ENCODE measurements at regions of chr14 and their contacts with region 1.

Region 1: DNA sequence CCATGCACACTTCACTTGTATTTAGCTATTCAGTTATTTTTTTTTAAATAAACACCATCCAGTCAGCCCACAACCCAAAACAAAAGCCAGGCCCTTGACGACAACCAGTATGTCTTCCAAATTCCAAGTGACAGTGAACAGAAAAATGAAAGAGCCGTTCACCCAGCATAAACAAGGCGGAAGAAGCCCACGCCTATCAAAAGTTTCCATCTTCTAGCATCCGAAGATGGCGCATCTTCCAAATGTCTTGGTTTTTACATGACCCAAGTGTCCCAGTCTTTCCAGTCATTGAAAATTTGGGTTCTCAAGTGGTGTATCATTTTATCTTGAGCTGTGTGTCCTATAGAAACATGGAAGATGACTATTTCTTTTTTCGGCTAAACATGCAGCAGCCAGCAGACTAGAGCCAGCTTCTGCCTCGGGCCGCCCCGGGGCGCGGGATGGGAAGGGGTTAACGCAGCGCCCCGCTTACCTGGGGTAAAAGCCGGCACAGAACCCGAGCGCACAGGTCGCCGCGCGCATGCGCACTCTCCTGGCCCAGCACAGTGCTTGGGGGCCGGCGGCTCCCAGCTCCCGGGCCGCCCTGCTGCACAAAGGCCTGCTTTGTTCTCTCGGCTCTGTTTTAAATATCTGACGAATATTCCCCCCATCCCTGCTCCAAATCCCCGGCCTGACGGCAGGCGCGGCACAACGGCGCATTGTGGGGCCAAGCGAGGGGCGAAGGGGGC is 164.8 kb downstream of the ZFP36L1 start:
- DNase-seq: peak; percentile 52
- ATAC-seq: peak; percentile 76
- H3K4me3 Mint-ChIP-seq: peak overlapping the region; percentile 80
- H3K27ac Mint-ChIP-seq: peak overlapping the region; percentile 80
- H3K4me1 Mint-ChIP-seq: peaks cover 28% of the 10 kb centered on the region
- H3K27me3 Mint-ChIP-seq: no peaks in the 10 kb centered on the region
- CTCF ChIP-seq: no peak

Region 2: DNA sequence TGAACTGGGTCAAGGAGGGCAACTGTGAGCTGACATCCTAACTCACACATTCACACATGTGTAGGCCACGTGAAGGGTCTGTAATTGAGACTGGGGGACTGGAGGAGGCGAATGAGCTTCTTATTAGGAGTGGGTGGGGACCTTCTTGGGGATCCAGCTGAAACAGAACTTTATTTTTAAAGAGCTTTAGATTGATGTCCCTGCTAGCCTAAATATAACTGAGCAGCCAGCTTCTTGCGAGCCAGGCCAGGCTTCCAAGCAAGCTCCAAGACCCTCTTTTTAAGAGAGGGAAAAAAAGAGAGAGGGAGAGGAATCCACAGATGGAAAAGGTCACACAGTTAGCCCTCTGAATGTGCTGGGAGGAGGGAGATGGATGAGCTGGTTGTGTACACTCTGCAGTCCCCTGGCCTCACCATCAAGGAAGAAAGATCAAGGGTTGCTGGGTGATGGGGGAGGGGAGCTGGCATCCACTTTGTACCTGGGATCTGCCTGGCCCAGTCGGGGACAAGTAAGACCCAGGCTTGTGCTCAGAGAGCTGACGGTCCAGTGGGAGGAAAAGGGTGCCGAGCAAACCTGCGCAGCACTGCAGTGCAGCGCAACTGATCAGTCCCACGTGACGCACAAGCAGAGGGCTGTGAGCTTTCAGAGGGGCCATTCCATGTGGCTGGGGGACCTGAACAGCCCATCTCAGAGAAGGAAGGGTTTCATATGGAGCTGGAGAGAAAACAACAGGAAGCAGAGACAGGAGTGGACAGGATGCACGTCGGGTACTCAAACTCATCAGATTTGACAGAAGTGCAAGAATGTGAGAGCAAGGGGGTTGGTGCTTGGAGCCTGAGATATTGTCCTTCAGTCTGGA is 10.3 kb after region 1 on chr14:
- CTCF ChIA-PET with region 1: no interaction called
- POLR2A ChIA-PET with region 1: interaction called, 11 read pairs
- intact Hi-C with region 1: no loop called
- DNase-seq: no peak
- ATAC-seq: no peak
- H3K4me3 Mint-ChIP-seq: no peak overlapping the region
- H3K27ac Mint-ChIP-seq: no peak overlapping the region
- H3K4me1 Mint-ChIP-seq: peaks cover 7% of the 10 kb centered on the region
- H3K27me3 Mint-ChIP-seq: no peaks in the 10 kb centered on the region
- CTCF ChIP-seq: no peak

Region 3: DNA sequence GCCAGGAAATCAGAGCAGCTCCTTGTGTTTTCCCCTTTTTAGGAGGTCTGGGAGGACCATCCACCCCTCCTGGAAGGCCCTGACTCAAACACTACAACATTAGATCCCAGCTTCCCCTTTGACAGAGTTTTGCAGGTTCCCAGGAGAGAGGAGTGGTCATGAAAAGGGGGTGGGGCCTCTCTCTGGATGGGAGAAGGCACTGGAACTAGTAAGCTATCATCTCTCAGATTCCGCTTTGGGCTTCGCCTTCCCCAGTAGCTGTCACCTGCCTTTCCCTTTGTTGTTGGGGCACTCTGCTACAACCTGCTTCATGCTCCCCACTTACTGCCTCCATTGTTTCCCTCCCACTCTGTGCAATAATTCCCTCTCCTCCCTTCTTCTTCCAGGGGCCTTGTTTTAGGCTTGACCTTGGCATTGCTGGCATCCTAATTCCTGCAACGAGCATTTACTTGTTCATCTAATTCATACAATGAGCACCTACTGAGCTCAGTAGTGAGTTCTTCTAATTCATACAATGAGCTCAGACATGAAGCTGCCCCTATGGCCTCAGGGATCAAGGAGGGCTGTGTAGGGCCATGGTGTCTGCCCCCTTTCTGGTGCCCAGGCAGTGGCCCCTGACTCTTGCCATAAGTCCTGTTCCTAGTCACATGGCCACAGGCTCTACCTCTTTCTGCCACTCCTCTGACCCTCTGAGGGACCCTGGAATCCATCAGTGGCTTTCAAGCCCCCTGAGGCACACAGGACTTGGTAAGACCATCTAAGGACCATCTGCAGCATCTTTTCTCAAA is 15.9 kb after region 1 on chr14:
- CTCF ChIA-PET with region 1: no interaction called
- POLR2A ChIA-PET with region 1: interaction called, 11 read pairs
- intact Hi-C with region 1: no loop called
- DNase-seq: no peak
- ATAC-seq: no peak
- H3K4me3 Mint-ChIP-seq: no peak overlapping the region
- H3K27ac Mint-ChIP-seq: no peak overlapping the region
- H3K4me1 Mint-ChIP-seq: no peaks in the 10 kb centered on the region
- H3K27me3 Mint-ChIP-seq: no peaks in the 10 kb centered on the region
- CTCF ChIP-seq: no peak

Region 4: DNA sequence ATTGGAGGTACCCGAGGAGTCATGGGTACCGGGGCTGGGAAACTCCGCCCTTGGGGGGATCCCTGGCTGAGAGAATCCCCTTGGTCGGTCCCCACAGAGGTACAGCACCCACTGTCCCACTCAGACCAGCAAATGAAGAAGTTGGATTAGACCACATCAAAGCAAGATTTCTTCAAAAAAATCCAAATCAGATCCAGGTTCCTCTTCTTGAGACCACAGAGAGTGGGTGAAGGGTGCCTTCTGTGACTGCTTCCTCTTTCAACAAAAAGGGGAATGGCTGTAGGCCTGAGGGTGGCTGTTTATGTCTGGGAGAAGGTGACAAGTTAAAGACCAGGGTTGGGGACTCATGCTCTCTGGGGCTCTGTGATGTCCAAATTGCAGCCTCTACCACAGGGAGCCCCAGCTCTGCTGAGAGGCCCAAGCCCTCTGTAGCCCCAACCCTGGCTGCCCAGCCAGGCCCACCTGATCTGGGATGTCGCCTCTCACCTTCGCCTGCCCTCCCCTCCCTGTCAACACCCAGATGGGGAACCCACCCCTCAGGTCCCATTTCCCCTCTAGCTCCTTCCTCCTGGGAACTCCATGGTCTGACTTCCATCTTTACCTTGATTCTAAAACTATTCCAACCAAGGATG is 113.9 kb after region 1 on chr14:
- CTCF ChIA-PET with region 1: no interaction called
- POLR2A ChIA-PET with region 1: no interaction called
- intact Hi-C with region 1: loop called (anchors 1 kb)
- DNase-seq: peak; percentile 65
- ATAC-seq: peak; percentile 89
- H3K4me3 Mint-ChIP-seq: peak overlapping the region; percentile 32
- H3K27ac Mint-ChIP-seq: peak overlapping the region; percentile 86
- H3K4me1 Mint-ChIP-seq: peaks cover 54% of the 10 kb centered on the region
- H3K27me3 Mint-ChIP-seq: no peaks in the 10 kb centered on the region
- CTCF ChIP-seq: no peak

Measured in activated B cell treated with CpG ODN at 0.5 μM for 24 hours (primary cell).